Spleen (tissue), 13 donors: ENCODE measurements at regions of chr10 and their contacts with region 1.

Region 1: GRCh38 chr10:86397120-86397519 is 30.5 kb upstream of the GRID1 start:
- DNase-seq: peak; percentile 44
- H3K4me3 ChIP-seq: no peak overlapping the region
- H3K27ac ChIP-seq: no peak overlapping the region
- H3K4me1 ChIP-seq: peaks cover 17 to 30% (median 28%) of the 10 kb centered on the region in 6 donors
- H3K27me3 ChIP-seq: peaks cover 0 to 78% (median 25%) of the 10 kb centered on the region in 7 donors
- CTCF ChIP-seq: no peak
- POLR2A ChIP-seq: no peak

Region 2: DNA sequence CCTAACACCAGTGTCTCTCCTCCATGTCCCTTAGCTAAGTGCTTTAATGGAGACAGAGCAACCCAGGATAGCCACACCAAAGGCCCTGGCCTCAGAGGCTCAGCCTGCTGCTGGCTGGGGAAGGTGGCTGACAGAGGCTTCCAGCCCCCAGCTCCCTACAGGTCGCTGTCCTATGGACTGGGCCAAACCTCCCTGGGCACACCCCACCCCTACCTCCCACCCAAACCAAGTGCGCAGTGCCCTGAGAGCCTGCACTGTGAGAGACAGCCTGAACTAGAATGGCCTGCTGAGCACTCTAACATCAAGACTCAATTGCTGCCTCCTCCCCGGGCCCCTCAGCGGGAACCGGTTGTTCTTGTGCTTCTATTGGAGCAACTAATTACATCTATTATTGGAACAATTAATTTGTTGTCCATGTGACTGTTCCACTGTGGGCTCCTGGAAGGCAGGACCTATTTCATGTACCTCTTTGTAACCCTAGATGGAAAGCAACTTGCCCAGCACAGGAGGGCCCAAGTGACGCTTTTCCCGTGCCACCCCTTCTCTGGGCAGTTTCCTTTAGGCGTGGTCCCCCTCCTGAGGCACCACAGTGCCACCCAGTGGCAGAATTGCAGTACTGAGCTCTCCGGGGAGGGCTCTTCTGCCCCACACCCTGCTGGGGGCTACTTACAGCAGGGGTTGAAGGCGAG is 188.1 kb after region 1 on chr10:
- intact Hi-C with region 1: loop called (anchors 2 kb)
- DNase-seq: peak; percentile 91
- H3K4me3 ChIP-seq: no peak overlapping the region
- H3K27ac ChIP-seq: no peak overlapping the region
- H3K4me1 ChIP-seq: peaks cover 0 to 14% (median 3%) of the 10 kb centered on the region in 6 donors
- H3K27me3 ChIP-seq: peaks cover 0 to 28% (median 0%) of the 10 kb centered on the region in 7 donors
- CTCF ChIP-seq: peak; percentile 79 to 95 (median 90)
- POLR2A ChIP-seq: no peak